Activated CD4-positive, alpha-beta memory T cell treated with anti-CD3 and anti-CD28 coated beads, Interleukin-2, amount 10 ng/mL, durations not matched to agents 7 days and 5 days (primary cell): ENCODE measurements at regions of chr3 and their contacts with region 1.

Region 1: DNA sequence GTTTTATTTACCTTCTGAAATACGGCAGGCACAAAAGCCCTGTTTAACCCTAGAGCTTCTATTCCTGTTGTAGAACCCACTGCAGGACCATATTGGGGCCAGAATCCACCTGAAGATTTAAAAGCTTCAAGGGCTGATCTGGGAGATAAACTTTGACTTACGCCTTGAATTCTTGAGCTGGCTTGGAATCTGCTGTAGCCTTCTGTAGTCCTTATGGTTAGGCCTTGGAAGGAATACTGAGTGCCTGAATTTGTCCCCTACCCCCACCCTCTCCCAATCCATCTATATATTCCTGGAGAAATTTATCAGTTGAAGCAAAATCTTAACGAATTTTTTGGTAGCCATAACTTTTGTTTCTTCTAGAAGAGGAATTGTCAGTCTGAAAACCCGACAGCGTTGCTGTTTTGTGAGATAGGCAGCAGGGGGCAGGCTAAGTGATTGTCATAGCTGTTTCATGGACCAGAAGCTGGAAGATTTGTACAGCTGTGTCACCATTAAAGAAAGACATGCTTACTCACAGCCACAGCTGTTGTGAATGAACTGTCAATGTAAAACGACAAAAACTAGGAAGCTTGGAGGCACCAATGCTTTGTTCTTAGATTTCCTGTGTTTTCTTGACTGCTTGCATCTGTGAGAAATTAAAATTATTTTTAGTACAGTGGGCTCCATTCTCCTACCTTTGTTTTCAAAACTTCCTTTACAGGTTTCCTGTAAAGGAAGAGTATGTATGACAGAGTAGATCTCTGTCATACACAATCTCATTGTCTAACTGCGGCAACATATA is 12.8 kb downstream of the LXN start:
- DNase-seq: peak; percentile 64
- H3K4me3 Mint-ChIP-seq: no peak overlapping the region
- H3K27ac Mint-ChIP-seq: no peak overlapping the region
- H3K4me1 Mint-ChIP-seq: peaks cover 11% of the 10 kb centered on the region
- H3K27me3 Mint-ChIP-seq: no peaks in the 10 kb centered on the region

Region 2: DNA sequence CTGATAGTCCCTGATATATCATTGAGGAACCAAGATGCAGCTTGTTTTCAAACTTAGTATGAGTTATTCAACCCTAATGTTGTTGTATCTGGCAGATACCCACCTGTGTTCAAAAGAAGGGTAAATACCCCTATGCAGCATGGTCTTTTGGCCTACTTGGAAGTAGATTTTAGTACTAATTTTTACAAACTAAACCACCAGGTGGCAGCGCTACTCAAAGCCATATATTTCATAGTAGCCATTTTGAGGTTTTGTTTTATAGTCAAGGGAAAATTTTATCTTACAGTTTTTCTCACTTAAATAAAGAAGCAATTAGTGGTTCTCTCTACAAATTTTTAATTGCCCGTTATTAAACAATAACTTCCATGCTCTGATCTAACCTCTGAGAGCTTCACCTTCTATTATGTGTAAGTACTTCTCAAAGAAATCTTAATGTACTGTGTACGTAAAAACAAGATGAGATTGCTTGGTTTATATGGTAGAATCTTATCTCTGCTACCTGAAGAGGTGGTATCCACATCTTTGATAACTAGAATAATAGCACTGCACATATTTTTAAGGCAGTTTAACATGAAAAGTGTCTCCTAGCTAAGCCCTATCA is 120.1 kb before region 1 on chr3:
- CTCF ChIA-PET with region 1: interaction called, 10 read pairs
- POLR2A ChIA-PET with region 1: no interaction called
- DNase-seq: peak; percentile 31
- H3K4me3 Mint-ChIP-seq: no peak overlapping the region
- H3K27ac Mint-ChIP-seq: no peak overlapping the region
- H3K4me1 Mint-ChIP-seq: no peaks in the 10 kb centered on the region
- H3K27me3 Mint-ChIP-seq: no peaks in the 10 kb centered on the region

Region 3: DNA sequence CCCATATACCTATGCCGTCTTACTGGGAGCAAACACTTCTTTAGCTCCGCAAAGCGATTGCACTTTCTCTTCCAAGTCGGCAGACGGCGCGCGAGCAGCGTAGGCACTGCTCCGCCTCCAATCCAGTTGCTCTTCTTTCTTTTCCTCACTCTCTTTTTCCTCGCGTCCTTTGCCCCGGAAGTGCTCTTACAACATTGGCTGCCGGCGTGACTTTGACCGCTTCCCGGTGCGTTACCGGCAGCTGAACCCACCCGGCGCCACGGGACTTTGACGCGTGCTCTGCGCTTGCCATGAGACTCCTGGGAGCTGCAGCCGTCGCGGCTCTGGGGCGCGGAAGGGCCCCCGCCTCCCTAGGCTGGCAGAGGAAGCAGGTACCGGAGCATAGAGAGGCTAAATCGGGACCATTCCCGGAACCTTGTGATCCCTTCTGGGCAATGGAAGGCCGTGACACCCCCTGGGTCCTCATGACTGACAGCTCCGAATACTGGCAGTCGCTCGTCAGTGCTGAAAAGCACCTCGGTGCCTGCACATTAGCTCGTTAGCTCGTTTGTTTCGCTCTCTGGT is 15.2 kb before region 1 on chr3 and contains the start of gene GFM1:
- CTCF ChIA-PET with region 1: interaction called, 59 read pairs
- POLR2A ChIA-PET with region 1: interaction called, 16 read pairs
- DNase-seq: peak; percentile 91
- H3K4me3 Mint-ChIP-seq: peak within 1 kb of the TSS; percentile 93
- H3K27ac Mint-ChIP-seq: peak within 1 kb of the TSS; percentile 78
- H3K4me1 Mint-ChIP-seq: peaks cover 48% of the 10 kb centered on the region
- H3K27me3 Mint-ChIP-seq: no peaks in the 10 kb centered on the region
- total RNA-seq, gene GFM1: 32.4 TPM

Region 4: GRCh38 chr3:158672293-158673176 is 12.9 kb after region 1 on chr3 and contains the start of gene LXN:
- CTCF ChIA-PET with region 1: interaction called, 60 read pairs
- POLR2A ChIA-PET with region 1: interaction called, 7 read pairs
- DNase-seq: peak; percentile 86
- H3K4me3 Mint-ChIP-seq: peak within 1 kb of the TSS; percentile 90
- H3K27ac Mint-ChIP-seq: peak within 1 kb of the TSS; percentile 85
- H3K4me1 Mint-ChIP-seq: peaks cover 28% of the 10 kb centered on the region
- H3K27me3 Mint-ChIP-seq: no peaks in the 10 kb centered on the region
- total RNA-seq, gene LXN: 10.3 to 11.9 TPM

Region 5: GRCh38 chr3:158790901-158791589 is 131.4 kb after region 1 on chr3:
- CTCF ChIA-PET with region 1: interaction called, 61 read pairs
- POLR2A ChIA-PET with region 1: interaction called, 3 read pairs
- DNase-seq: peak; percentile 25
- H3K4me3 Mint-ChIP-seq: peak overlapping the region; percentile 34
- H3K27ac Mint-ChIP-seq: no peak overlapping the region
- H3K4me1 Mint-ChIP-seq: peaks cover 6% of the 10 kb centered on the region
- H3K27me3 Mint-ChIP-seq: no peaks in the 10 kb centered on the region

Region 6: GRCh38 chr3:158801696-158802408 is 142.2 kb after region 1 on chr3 and contains the start of gene MFSD1:
- CTCF ChIA-PET with region 1: interaction called, 10 read pairs
- POLR2A ChIA-PET with region 1: interaction called, 4 read pairs
- DNase-seq: peak; percentile 94
- H3K4me3 Mint-ChIP-seq: peak within 1 kb of the TSS; percentile 84
- H3K27ac Mint-ChIP-seq: peak within 1 kb of the TSS; percentile 80
- H3K4me1 Mint-ChIP-seq: peaks cover 25% of the 10 kb centered on the region
- H3K27me3 Mint-ChIP-seq: peaks cover 4% of the 10 kb centered on the region
- total RNA-seq, gene MFSD1: 26.9 to 27.4 TPM